Spleen (tissue), 13 donors: ENCODE measurements at regions of chr3 and their contacts with region 1.

Region 1: GRCh38 chr3:101573449-101574387 is at the start of gene PCNP:
- DNase-seq: peak; percentile 100
- H3K4me3 ChIP-seq: peak within 1 kb of the TSS; percentile 67 to 92 (median 82)
- H3K27ac ChIP-seq: peak within 1 kb of the TSS; percentile 93 to 99 (median 97)
- H3K4me1 ChIP-seq: peaks cover 34 to 55% (median 50%) of the 10 kb centered on the region in 6 donors
- H3K27me3 ChIP-seq: no peaks in the 10 kb centered on the region
- CTCF ChIP-seq: peak; percentile 78 to 93 (median 89)
- POLR2A ChIP-seq: peak; percentile 1 to 82 (median 76)
- total RNA-seq, gene PCNP: 104 to 122 (median 112) TPM

Region 2: GRCh38 chr3:101484805-101485620 is 88.7 kb before region 1 on chr3:
- intact Hi-C with region 1: no loop called
- DNase-seq: no peak
- H3K4me3 ChIP-seq: no peak overlapping the region
- H3K27ac ChIP-seq: no peak overlapping the region
- H3K4me1 ChIP-seq: peaks cover 0 to 6% (median 0%) of the 10 kb centered on the region in 6 donors
- H3K27me3 ChIP-seq: no peaks in the 10 kb centered on the region
- CTCF ChIP-seq: no peak
- POLR2A ChIP-seq: no peak

Region 3: DNA sequence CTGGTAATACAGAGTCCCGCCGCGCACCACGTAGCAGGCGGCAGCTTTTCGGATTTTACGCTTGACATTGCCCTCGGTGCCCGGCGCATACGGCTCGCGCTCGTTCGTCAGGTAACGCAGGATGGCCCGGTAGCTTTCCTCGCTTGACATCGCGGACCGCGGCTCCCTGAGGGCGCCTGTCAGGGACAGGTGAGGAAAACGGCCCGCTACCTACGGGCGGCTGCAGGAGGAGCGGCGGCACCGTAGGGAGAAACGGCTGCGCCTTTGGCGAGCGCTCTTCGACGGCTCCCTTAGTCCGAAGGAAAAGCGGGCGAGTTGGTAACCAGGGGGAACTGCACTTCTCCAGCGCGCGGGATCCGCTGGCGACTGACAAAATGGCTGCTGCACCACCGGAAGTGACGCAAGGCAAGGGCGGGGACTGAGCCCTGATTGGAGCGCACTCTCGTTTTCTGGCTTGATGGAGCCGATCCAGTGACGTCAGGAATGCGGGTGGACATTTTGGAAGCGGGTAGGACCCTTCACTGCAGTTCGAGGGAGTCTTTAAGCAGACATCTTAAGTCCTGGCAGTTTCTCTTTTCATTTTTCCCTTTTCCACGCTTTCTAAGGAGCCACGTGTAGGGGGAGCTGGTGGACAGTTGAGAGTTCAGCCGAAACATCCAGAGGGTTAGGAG is 103.2 kb after region 1 on chr3 and contains the start of gene ZBTB11:
- intact Hi-C with region 1: loop called (anchors 10 kb)
- DNase-seq: peak; percentile 99
- H3K4me3 ChIP-seq: peak within 1 kb of the TSS; percentile 88 to 100 (median 97)
- H3K27ac ChIP-seq: peak within 1 kb of the TSS; percentile 96 to 100 (median 98)
- H3K4me1 ChIP-seq: peaks cover 20 to 76% (median 58%) of the 10 kb centered on the region in 6 donors
- H3K27me3 ChIP-seq: no peaks in the 10 kb centered on the region
- CTCF ChIP-seq: peak in 7 of 11 experiments; percentile 6 to 57 (median 30)
- POLR2A ChIP-seq: peak in 2 of 3 donors; percentile 9 to 73
- total RNA-seq, gene ZBTB11: 23.2 to 43.7 (median 26.3) TPM

Region 4: GRCh38 chr3:101898752-101899169 is 325.0 kb after region 1 on chr3:
- intact Hi-C with region 1: no loop called
- DNase-seq: no peak
- H3K4me3 ChIP-seq: no peak overlapping the region
- H3K27ac ChIP-seq: peak overlapping the region in 7 of 8 donors; percentile 24 to 82 (median 70)
- H3K4me1 ChIP-seq: peaks cover 0 to 35% (median 16%) of the 10 kb centered on the region in 6 donors
- H3K27me3 ChIP-seq: no peaks in the 10 kb centered on the region
- CTCF ChIP-seq: no peak
- POLR2A ChIP-seq: no peak